ENCODE measurements at regions of chr2 and their contacts with region 1.

Region 1: GRCh38 chr2:64782051-64782390 is 128.3 kb upstream of the SERTAD2 start:
- DNase-seq: no peak
- ATAC-seq: no peak

Region 2: DNA sequence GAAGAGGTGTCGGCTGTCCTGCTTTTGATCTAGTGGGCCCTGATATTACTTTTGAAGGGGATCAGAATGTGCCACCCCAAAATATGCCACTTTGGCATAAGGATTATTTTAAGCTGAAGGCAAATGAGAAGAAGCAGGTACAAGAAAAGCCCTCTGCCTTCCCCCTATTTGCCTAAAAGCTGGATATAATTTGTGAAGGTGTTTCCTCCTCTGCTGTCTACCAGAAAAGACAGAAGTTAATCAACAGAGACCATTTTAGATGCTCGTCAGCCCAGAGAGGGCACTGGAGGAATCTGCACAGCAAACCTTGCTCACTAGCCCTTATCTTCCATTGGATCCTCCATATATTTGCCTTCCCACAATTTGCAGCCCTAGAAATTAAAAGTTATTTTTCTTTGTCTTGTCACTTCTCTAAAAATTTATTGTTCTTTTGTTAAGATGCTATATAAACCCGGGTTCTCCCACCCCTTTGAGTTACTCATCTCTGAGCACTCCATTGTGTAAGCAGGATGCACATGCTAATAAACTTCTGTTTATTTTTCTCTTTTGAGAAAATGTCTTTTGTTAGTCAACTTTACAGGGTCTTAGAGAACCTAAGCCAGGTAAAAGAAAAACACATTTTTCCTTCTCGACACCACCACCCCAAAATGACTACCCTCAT is 43.9 kb after region 1 on chr2:
- intact Hi-C with region 1: loop called (anchors 5 kb)
- DNase-seq: no peak
- ATAC-seq: no peak